ENCODE measurements at regions of chr1 and their contacts with region 1.

Region 1: DNA sequence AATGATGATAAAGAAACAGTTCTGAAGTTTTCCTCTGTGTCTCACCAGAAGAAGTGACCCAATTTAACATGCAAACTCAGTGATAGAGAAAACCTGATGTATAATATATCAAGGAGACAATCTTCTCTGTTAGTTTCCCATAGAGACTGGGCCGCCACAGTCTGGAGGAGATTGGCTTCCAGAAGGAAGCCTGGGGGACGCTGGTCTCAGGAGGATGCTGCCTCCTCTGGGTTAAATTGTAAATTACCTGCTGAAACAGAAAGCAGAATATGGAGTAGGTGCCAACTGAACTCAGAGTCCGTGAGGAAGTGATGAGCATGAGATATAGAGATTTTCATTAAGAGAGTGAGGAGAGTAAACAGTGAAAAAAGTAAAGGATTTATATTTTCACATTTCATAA is 15.8 kb downstream of the OR14I1 start:
- DNase-seq: peak in 6 of 9 donors; percentile 15 to 54 (median 28)
- ATAC-seq: peak; percentile 70
- H3K4me3 ChIP-seq: no peak overlapping the region
- H3K4me3 Mint-ChIP-seq: peak overlapping the region in 3 of 10 donors; percentile 3 to 5 (median 3)
- H3K27ac ChIP-seq: no peak overlapping the region
- H3K27ac Mint-ChIP-seq: no peak overlapping the region
- H3K4me1 ChIP-seq: no peaks in the 10 kb centered on the region
- H3K4me1 Mint-ChIP-seq: peaks cover 0 to 6% (median 6%) of the 10 kb centered on the region in 7 donors
- H3K27me3 ChIP-seq: peaks cover 0 to under 1% of the 10 kb centered on the region in 2 donors
- H3K27me3 Mint-ChIP-seq: peaks cover 4 to 9% (median 6%) of the 10 kb centered on the region in 5 donors

Region 2: DNA sequence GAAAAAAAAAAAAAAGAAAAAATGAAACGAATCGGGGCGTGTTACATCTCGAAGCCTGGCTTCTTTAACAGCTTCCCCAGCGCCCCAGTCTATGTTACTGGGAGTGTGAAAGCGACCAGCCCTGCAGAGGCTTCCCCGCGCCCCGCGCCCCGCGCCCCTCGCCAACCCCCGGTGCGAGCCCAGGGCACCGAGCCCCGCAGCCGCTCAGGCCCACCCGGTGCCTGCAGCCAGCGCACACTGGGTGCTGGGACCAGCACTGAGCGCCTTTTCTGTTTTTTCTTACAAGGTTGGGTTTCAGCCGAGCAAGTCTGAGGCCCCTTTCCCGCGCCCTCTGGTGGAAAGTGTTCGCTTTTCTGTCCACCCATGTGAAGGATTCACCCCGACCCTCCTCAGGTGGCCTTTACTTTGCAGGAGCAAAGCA is 1313.1 kb before region 1 on chr1:
- CTCF ChIA-PET with region 1: no interaction called
- POLR2A ChIA-PET with region 1: no interaction called
- intact Hi-C with region 1: no loop called
- DNase-seq: peak; percentile 37 to 64 (median 48)
- ATAC-seq: peak; percentile 84
- H3K4me3 ChIP-seq: peak overlapping the region; percentile 46
- H3K4me3 Mint-ChIP-seq: peak overlapping the region in 9 of 10 donors; percentile 14 to 70 (median 58)
- H3K27ac ChIP-seq: no peak overlapping the region
- H3K27ac Mint-ChIP-seq: no peak overlapping the region
- H3K4me1 ChIP-seq: no peaks in the 10 kb centered on the region
- H3K4me1 Mint-ChIP-seq: peaks cover 0 to 10% (median 7%) of the 10 kb centered on the region in 7 donors
- H3K27me3 ChIP-seq: no peaks in the 10 kb centered on the region
- H3K27me3 Mint-ChIP-seq: peaks cover 4 to 19% (median 6%) of the 10 kb centered on the region in 5 donors

Region 3: GRCh38 chr1:247681288-247681897 is 1005.4 kb before region 1 on chr1:
- CTCF ChIA-PET with region 1: no interaction called
- POLR2A ChIA-PET with region 1: no interaction called
- intact Hi-C with region 1: loop called in 1 of 2 experiments (anchors 5 kb)
- DNase-seq: peak in 6 of 9 donors; percentile 1 to 13 (median 10)
- ATAC-seq: no peak
- H3K4me3 ChIP-seq: no peak overlapping the region
- H3K4me3 Mint-ChIP-seq: no peak overlapping the region
- H3K27ac ChIP-seq: no peak overlapping the region
- H3K27ac Mint-ChIP-seq: no peak overlapping the region
- H3K4me1 ChIP-seq: no peaks in the 10 kb centered on the region
- H3K4me1 Mint-ChIP-seq: peaks cover 0 to 3% (median 0%) of the 10 kb centered on the region in 7 donors
- H3K27me3 ChIP-seq: no peaks in the 10 kb centered on the region
- H3K27me3 Mint-ChIP-seq: peaks cover 0 to 12% (median 7%) of the 10 kb centered on the region in 5 donors

Region 4: DNA sequence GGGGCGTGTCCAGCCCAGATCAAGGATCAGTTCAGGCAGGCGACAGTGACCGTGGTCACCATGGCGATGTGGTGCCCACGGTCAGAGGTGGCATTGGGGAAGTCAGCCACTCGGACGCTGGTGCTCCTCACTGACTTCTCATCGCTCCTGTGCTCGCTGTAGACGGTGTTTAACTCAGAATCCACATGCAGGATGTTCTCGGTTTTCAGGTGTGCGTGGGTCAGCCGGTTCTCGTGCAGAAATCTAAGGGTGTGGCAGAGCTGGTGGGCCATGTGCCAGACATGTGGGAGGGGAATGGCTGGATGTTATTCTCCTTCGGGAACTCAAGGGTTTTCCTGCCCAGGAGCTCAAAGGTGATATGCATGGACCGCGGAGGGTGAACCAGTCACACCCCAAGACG is 750.4 kb before region 1 on chr1:
- CTCF ChIA-PET with region 1: no interaction called
- POLR2A ChIA-PET with region 1: no interaction called
- intact Hi-C with region 1: loop called (anchors 5 to 10 kb)
- DNase-seq: no peak
- ATAC-seq: no peak
- H3K4me3 ChIP-seq: no peak overlapping the region
- H3K4me3 Mint-ChIP-seq: peak overlapping the region in 3 of 10 donors; percentile 5 to 88 (median 43)
- H3K27ac ChIP-seq: no peak overlapping the region
- H3K27ac Mint-ChIP-seq: peak overlapping the region in 1 of 9 donors; percentile 41
- H3K4me1 ChIP-seq: no peaks in the 10 kb centered on the region
- H3K4me1 Mint-ChIP-seq: peaks cover 0 to 15% (median 0%) of the 10 kb centered on the region in 7 donors
- H3K27me3 ChIP-seq: no peaks in the 10 kb centered on the region
- H3K27me3 Mint-ChIP-seq: peaks cover 0 to 6% (median 2%) of the 10 kb centered on the region in 5 donors

Region 5: GRCh38 chr1:248243204-248243603 is 443.6 kb before region 1 on chr1:
- CTCF ChIA-PET with region 1: interaction called, 3 read pairs
- POLR2A ChIA-PET with region 1: no interaction called
- intact Hi-C with region 1: loop called in 1 of 2 experiments (anchors 1 kb)
- DNase-seq: peak in 6 of 9 donors; percentile 4 to 42 (median 24)
- ATAC-seq: peak; percentile 69
- H3K4me3 ChIP-seq: no peak overlapping the region
- H3K4me3 Mint-ChIP-seq: peak overlapping the region in 7 of 10 donors; percentile 8 to 54 (median 42)
- H3K27ac ChIP-seq: no peak overlapping the region
- H3K27ac Mint-ChIP-seq: no peak overlapping the region
- H3K4me1 ChIP-seq: no peaks in the 10 kb centered on the region
- H3K4me1 Mint-ChIP-seq: peaks cover 0 to 6% (median 3%) of the 10 kb centered on the region in 7 donors
- H3K27me3 ChIP-seq: no peaks in the 10 kb centered on the region
- H3K27me3 Mint-ChIP-seq: peaks cover 7 to 39% (median 22%) of the 10 kb centered on the region in 5 donors

Region 6: DNA sequence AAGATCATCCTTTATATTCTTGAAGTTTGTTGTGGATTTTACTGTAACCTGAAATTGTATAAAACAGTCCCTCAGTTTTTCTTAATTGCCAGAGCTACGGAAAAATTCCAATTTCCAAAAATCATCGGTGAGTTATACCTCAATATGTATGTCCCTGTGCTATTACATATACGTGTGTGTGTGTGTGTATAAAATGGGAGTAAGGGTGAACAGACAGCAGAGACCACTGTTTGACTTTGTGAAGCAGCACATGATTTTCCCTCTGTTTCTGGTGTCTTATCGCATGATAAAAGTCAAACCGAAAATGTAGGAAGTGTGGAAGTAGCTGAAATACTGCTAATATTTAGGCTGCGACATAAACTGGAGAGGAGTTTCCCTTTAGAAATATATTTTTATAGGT is 282.8 kb before region 1 on chr1:
- CTCF ChIA-PET with region 1: no interaction called
- POLR2A ChIA-PET with region 1: no interaction called
- intact Hi-C with region 1: loop called (anchors 1 kb)
- DNase-seq: peak in 3 of 9 donors; percentile 6 to 32 (median 8)
- ATAC-seq: peak; percentile 91
- H3K4me3 ChIP-seq: no peak overlapping the region
- H3K4me3 Mint-ChIP-seq: no peak overlapping the region
- H3K27ac ChIP-seq: no peak overlapping the region
- H3K27ac Mint-ChIP-seq: peak overlapping the region in 4 of 9 donors; percentile 0 to 5 (median 0)
- H3K4me1 ChIP-seq: no peaks in the 10 kb centered on the region
- H3K4me1 Mint-ChIP-seq: peaks cover 0 to 16% (median 4%) of the 10 kb centered on the region in 7 donors
- H3K27me3 ChIP-seq: no peaks in the 10 kb centered on the region
- H3K27me3 Mint-ChIP-seq: no peaks in the 10 kb centered on the region

Region 7: DNA sequence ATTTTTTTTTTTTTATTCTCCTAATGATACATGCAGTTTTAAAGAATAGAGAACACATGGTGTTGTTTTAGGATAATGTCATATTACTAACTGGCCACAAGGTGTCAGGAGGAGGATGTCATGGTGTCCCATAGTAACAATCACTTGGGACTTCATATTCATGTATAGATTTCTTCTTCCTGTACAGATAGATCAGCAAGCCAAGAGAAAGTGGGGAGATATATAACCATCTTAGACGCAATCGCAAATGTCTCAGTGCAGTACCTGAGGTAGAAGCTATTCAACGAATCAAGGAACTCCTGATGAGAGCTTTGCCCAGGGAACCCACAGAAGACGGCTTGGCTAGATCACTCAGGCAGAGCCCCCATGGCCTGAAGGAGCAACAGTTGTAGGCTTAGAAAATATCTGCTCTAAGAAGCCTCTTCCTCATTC is 64.2 kb before region 1 on chr1:
- CTCF ChIA-PET with region 1: no interaction called
- POLR2A ChIA-PET with region 1: no interaction called
- intact Hi-C with region 1: loop called (anchors 1 to 2 kb)
- DNase-seq: peak in 6 of 9 donors; percentile 9 to 35 (median 24)
- ATAC-seq: peak; percentile 87
- H3K4me3 ChIP-seq: no peak overlapping the region
- H3K4me3 Mint-ChIP-seq: no peak overlapping the region
- H3K27ac ChIP-seq: no peak overlapping the region
- H3K27ac Mint-ChIP-seq: peak overlapping the region in 1 of 9 donors; percentile 56
- H3K4me1 ChIP-seq: peaks cover 0 to 6% of the 10 kb centered on the region in 2 donors
- H3K4me1 Mint-ChIP-seq: peaks cover 1 to 13% (median 7%) of the 10 kb centered on the region in 7 donors
- H3K27me3 ChIP-seq: no peaks in the 10 kb centered on the region
- H3K27me3 Mint-ChIP-seq: peaks cover 0 to 3% (median 0%) of the 10 kb centered on the region in 5 donors

Region 8: DNA sequence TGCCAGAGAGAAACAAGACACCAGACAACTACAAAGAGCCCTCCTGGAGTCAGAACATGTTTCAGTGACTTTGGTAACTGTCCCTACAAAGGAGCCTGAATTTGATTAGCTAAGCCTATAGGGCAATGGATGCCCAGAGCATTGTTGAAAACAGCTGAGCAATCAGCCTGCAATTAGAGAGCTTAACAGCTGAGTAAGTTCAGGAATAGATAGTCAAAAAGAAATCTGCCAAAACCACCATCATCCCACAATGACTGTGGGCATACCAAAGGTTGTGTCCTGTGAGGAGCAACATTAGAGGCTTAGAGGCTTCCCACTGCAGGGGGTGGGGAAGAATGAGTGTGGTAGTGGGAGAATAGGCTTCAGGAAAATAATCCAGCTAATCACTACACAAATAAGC is 106.8 kb after region 1 on chr1:
- CTCF ChIA-PET with region 1: no interaction called
- POLR2A ChIA-PET with region 1: no interaction called
- intact Hi-C with region 1: no loop called
- DNase-seq: no peak
- ATAC-seq: no peak
- H3K4me3 ChIP-seq: no peak overlapping the region
- H3K4me3 Mint-ChIP-seq: no peak overlapping the region
- H3K27ac ChIP-seq: no peak overlapping the region
- H3K27ac Mint-ChIP-seq: no peak overlapping the region
- H3K4me1 ChIP-seq: no peaks in the 10 kb centered on the region
- H3K4me1 Mint-ChIP-seq: peaks cover 0 to 5% (median 0%) of the 10 kb centered on the region in 7 donors
- H3K27me3 ChIP-seq: no peaks in the 10 kb centered on the region
- H3K27me3 Mint-ChIP-seq: peaks cover 5 to 17% (median 11%) of the 10 kb centered on the region in 5 donors

Region 9: GRCh38 chr1:248807067-248807737 is 120.4 kb after region 1 on chr1:
- CTCF ChIA-PET with region 1: no interaction called
- POLR2A ChIA-PET with region 1: no interaction called
- intact Hi-C with region 1: loop called (anchors 1 to 2 kb)
- DNase-seq: peak; percentile 29 to 64 (median 50)
- ATAC-seq: peak; percentile 75
- H3K4me3 ChIP-seq: no peak overlapping the region
- H3K4me3 Mint-ChIP-seq: no peak overlapping the region
- H3K27ac ChIP-seq: no peak overlapping the region
- H3K27ac Mint-ChIP-seq: peak overlapping the region in 5 of 9 donors; percentile 17 to 58 (median 29)
- H3K4me1 ChIP-seq: no peaks in the 10 kb centered on the region
- H3K4me1 Mint-ChIP-seq: peaks cover 7 to 23% (median 20%) of the 10 kb centered on the region in 7 donors
- H3K27me3 ChIP-seq: no peaks in the 10 kb centered on the region
- H3K27me3 Mint-ChIP-seq: peaks cover 0 to 9% (median 6%) of the 10 kb centered on the region in 5 donors